Aorta (tissue), 5 donors: ENCODE measurements at regions of chr3 and their contacts with region 1.

Region 1: GRCh38 chr3:72887705-72888545 is at the start of gene GXYLT2:
- DNase-seq: peak; percentile 81 to 87
- ATAC-seq: peak; percentile 86
- H3K4me3 ChIP-seq: peak within 1 kb of the TSS; percentile 96 to 97
- H3K27ac ChIP-seq: peak within 1 kb of the TSS; percentile 62 to 78
- H3K4me1 ChIP-seq: no peaks in the 10 kb centered on the region
- H3K27me3 ChIP-seq: no peaks in the 10 kb centered on the region
- total RNA-seq, gene GXYLT2: 20.4 to 46.4 TPM

Region 2: DNA sequence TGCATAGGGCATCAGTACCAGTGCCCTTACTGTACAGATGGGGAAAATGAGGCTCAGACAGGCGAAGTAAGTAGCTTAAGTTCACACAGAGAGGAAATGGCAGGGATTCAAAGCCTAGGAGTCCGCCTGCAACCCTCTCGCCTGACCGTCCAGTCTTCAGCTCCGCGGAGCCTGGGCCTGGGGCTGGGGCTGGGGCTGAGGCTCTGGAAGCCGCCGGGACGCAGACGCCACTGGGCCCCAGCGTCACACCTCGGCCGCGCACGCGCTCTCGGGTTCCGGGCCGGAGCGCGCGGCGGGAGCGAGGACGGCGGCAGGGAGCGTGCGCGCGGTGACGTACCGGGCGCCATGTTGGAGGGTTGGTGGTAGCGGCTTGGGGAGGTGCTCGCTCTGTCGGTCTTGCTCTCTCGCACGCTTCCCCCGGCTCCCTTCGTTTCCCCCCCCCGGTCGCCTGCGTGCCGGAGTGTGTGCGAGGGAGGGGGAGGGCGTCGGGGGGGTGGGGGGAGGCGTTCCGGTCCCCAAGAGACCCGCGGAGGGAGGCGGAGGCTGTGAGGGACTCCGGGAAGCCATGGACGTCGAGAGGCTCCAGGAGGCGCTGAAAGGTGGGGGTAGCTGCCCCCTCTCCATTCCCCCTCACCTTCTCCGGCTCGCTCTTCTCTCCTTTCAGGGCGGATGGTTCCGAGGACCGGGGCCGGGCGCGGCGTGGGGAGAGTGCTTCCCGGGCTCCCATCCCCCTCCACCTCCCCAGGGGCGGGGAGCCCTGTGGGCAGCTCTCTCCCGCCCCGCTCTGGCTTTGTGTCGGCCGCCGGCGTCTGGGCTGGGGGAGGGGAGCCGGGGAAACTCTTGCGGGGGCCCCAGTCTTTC is 108.8 kb after region 1 on chr3 and contains the start of gene PPP4R2:
- intact Hi-C with region 1: loop called in 1 of 2 experiments (anchors 2 kb)
- DNase-seq: peak; percentile 94 to 97
- ATAC-seq: peak; percentile 98
- H3K4me3 ChIP-seq: peak within 1 kb of the TSS; percentile 95 to 97
- H3K27ac ChIP-seq: peak within 1 kb of the TSS; percentile 53 to 89
- H3K4me1 ChIP-seq: peaks cover 0 to 2% of the 10 kb centered on the region in 2 donors
- H3K27me3 ChIP-seq: no peaks in the 10 kb centered on the region
- total RNA-seq, gene PPP4R2: 65.4 to 70.7 TPM